OCI-LY7 (cell line): ENCODE measurements at regions of chr13 and their contacts with region 1.

Region 1: DNA sequence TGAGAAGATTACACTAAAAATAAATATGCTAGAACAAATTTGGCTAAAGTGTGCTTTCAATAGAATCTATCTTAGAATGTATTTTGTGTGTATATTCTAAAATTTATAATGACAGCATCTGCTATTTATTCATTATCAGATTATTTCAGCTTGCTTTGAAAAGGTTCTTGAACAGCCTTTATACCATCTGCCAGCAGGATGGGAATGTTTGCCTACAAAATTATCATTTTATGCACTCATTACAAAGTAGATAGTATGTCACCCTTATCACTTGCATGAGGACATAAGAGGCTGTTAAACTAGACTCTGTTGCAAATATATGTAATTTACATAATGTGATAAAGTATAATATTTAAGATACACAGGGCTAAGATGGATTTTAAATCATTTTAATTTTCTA is 1286.9 kb upstream of the PCDH20 start:
- DNase-seq: no peak
- H3K4me3 ChIP-seq: no peak overlapping the region
- H3K27ac ChIP-seq: no peak overlapping the region
- H3K4me1 ChIP-seq: no peaks in the 10 kb centered on the region
- CTCF ChIP-seq: no peak

Region 2: GRCh38 chr13:62524061-62524460 is 178.4 kb before region 1 on chr13:
- CTCF ChIA-PET with region 1: no interaction called
- POLR2A ChIA-PET with region 1: no interaction called
- intact Hi-C with region 1: loop called (anchors 10 kb)
- DNase-seq: no peak
- H3K4me3 ChIP-seq: no peak overlapping the region
- H3K27ac ChIP-seq: no peak overlapping the region
- H3K4me1 ChIP-seq: no peaks in the 10 kb centered on the region
- CTCF ChIP-seq: no peak

Region 3: GRCh38 chr13:62663767-62664166 is 38.7 kb before region 1 on chr13:
- CTCF ChIA-PET with region 1: no interaction called
- POLR2A ChIA-PET with region 1: no interaction called
- intact Hi-C with region 1: no loop called
- DNase-seq: no peak
- H3K4me3 ChIP-seq: no peak overlapping the region
- H3K27ac ChIP-seq: no peak overlapping the region
- H3K4me1 ChIP-seq: no peaks in the 10 kb centered on the region
- CTCF ChIP-seq: no peak